HEK293 (cell line): ENCODE measurements at regions of chr2 and their contacts with region 1.

Region 1: GRCh38 chr2:70301344-70302194 is at the start of gene FAM136A:
- H3K4me3 ChIP-seq: peak within 1 kb of the TSS; percentile 65
- H3K27ac ChIP-seq: peak within 1 kb of the TSS; percentile 88
- H3K4me1 ChIP-seq: peaks cover 6% of the 10 kb centered on the region; the same call in 1 of the 2 replicates
- CTCF ChIP-seq: peak; percentile 90

Region 2: DNA sequence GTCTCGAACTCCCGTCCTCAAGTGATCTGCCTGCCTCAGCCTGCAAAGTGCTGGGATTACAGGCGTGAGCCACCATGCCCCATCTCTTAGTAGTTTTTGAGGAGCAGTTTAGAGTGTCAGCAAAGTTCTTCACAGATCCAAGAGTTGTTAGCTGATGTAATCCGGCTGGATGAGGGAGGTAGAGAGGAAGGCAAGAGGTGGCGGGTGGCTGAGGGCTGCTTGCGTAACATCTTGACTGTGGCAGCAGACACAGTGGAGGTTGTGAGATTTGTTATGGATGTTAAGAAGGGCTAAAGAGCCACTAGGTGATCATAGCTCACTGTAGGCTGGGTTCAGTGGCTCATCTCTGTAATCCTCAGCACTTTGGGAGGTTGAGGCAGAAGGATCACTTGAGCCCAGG is 19.8 kb after region 1 on chr2:
- CTCF ChIA-PET with region 1: interaction called, 15 read pairs
- POLR2A ChIA-PET with region 1: no interaction called
- H3K4me3 ChIP-seq: no peak overlapping the region
- H3K27ac ChIP-seq: no peak overlapping the region
- H3K4me1 ChIP-seq: no peaks in the 10 kb centered on the region
- CTCF ChIP-seq: no peak

Region 3: DNA sequence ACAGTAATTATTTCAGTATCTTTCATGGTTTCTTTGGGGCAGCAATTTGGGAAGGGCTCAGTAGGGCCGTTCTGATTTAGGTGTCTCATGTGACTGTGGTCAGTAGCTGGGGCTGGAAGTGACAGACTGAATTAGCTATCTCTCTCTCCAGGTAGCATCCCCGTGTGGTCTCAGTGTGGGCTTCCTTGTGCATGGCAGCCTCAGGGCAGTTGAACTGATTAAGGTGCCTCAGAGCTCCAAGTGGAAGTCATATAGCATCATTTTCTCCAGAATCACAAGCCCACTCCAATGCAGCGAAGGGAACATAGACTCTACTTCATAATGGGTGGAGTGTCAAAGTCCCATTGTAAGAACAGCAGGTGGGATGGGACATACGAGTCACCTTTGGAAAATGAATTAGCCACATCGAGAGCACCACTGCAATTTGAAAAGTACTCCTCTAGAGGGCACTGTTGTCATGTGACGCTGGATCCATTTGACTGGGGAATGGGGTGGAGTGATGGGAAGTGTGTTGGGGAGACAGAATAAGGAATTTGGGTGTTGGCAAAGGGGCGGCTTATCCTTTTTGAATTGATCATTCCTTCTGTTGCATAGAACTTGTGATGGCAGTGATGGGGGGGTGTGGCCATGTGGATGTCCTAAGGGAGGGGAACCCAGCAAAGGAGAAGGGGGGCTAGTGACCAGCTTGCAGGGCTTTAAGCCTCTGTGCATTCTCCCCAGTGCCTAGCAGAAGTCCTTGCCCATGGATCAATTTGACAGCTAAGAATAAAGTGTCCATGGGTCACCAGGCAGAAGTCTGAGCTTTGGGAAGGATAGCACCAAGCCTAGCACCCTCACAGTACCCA is 39.6 kb after region 1 on chr2:
- CTCF ChIA-PET with region 1: interaction called, 63 read pairs
- POLR2A ChIA-PET with region 1: no interaction called
- H3K4me3 ChIP-seq: no peak overlapping the region
- H3K27ac ChIP-seq: no peak overlapping the region
- H3K4me1 ChIP-seq: no peaks in the 10 kb centered on the region
- CTCF ChIP-seq: peak; percentile 88

Region 4: DNA sequence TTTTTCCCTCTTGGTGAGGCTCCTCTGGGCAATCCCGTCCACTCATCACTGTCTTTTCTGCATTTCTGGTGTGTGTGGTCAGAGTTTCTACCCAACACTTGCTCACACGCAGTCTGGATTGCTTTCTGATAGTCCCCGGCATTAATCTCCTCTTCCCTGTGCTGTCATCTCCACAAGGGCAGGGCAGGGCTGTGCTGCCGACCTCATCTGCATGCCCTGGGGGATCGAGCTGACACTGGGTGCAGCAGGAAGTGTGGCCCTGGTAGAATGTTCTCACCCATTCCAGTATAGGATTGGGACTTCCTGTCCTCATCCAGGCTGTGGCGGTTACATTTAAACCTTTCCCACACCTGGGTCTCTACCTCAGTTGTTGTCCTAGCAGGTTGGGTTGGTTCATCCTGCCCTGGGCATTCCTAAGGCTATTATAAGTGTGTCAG is 80.3 kb after region 1 on chr2:
- CTCF ChIA-PET with region 1: no interaction called
- POLR2A ChIA-PET with region 1: no interaction called
- H3K4me3 ChIP-seq: no peak overlapping the region
- H3K27ac ChIP-seq: no peak overlapping the region
- H3K4me1 ChIP-seq: no peaks in the 10 kb centered on the region
- CTCF ChIP-seq: no peak

Region 5: GRCh38 chr2:70616168-70616694 is 314.7 kb after region 1 on chr2:
- CTCF ChIA-PET with region 1: interaction called, 98 read pairs
- POLR2A ChIA-PET with region 1: interaction called, 5 read pairs
- H3K4me3 ChIP-seq: no peak overlapping the region
- H3K27ac ChIP-seq: no peak overlapping the region
- H3K4me1 ChIP-seq: no peaks in the 10 kb centered on the region
- CTCF ChIP-seq: no peak

Region 6: GRCh38 chr2:70647873-70648481 is 346.4 kb after region 1 on chr2:
- CTCF ChIA-PET with region 1: interaction called, 163 read pairs
- POLR2A ChIA-PET with region 1: no interaction called
- H3K4me3 ChIP-seq: no peak overlapping the region
- H3K27ac ChIP-seq: no peak overlapping the region
- H3K4me1 ChIP-seq: no peaks in the 10 kb centered on the region
- CTCF ChIP-seq: peak; percentile 83